ENCODE measurements at regions of chr1 and their contacts with region 1.

Region 1: DNA sequence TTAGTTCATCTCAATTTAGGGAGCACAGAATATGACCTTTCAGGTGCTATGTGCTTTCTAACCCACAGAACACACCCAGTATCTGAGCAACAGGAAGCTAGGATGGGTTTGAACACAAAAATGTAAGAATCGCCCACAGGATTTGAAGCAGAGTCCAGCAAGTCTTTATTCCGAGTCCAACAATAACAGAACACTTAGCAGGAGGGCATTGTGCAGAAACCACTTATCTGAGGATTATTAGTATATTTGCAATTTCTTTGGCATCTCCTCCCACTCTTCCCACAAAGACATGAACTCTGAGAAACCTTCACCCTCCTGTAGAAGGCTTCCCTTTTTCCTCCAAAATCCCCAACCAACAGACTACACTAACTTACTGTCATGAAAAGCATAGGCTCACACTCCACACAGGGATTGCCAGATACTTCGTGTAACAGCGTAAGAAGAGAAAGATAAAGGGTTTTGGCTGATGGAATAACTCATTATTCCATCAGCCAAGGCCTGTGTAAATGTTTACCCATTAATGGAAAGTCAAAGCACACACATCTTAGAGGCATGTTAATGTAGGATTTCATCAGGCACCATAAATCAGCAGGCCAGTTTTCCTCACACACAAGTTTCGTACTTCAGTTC is 16.1 kb downstream of the SIPA1L2 start:
- DNase-seq: peak; percentile 90
- H3K4me3 ChIP-seq: no peak overlapping the region
- H3K27ac ChIP-seq: peak overlapping the region; percentile 50
- H3K27me3 ChIP-seq: no peaks in the 10 kb centered on the region
- CTCF ChIP-seq: no peak

Region 2: DNA sequence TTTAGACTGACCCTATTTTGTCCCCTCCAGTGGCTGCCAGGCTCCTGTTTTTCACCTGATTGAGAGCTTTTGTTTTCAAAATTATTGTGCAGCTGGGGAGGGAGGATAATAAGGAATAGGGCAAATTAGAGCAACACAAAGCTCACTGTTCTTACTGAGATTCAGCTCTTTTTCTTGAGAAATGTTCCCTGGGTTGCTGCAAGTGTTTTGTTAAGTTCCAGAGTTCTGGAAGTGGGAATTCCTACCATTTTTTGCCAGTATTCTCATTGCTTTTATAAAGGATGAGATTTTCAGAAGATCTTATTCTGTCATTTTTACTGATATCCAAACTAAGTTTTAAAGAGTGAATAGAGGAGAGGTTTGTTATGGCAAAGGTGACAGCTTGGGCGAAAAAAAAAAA is 401.6 kb before region 1 on chr1:
- CTCF ChIA-PET with region 1: no interaction called
- POLR2A ChIA-PET with region 1: interaction called, 10 read pairs
- DNase-seq: no peak
- H3K4me3 ChIP-seq: no peak overlapping the region
- H3K27ac ChIP-seq: no peak overlapping the region
- H3K27me3 ChIP-seq: no peaks in the 10 kb centered on the region
- CTCF ChIP-seq: no peak